ENCODE measurements at regions of chr16 and their contacts with region 1.

Region 1: GRCh38 chr16:28974437-28975157 is at the start of gene SPNS1:
- DNase-seq: peak; percentile 98
- ATAC-seq: peak; percentile 94
- H3K4me3 Mint-ChIP-seq: peak within 1 kb of the TSS; percentile 98
- H3K27ac Mint-ChIP-seq: peak within 1 kb of the TSS; percentile 93
- H3K4me1 Mint-ChIP-seq: peaks cover 30% of the 10 kb centered on the region
- H3K27me3 Mint-ChIP-seq: no peaks in the 10 kb centered on the region
- total RNA-seq, gene SPNS1: 12.7 to 14.2 TPM

Region 2: GRCh38 chr16:28984619-28985135 is 10.1 kb after region 1 on chr16 and contains the start of gene LAT:
- CTCF ChIA-PET with region 1: interaction called, 32 read pairs
- POLR2A ChIA-PET with region 1: interaction called, 3 read pairs
- intact Hi-C with region 1: no loop called
- DNase-seq: peak; percentile 87
- ATAC-seq: peak; percentile 67
- H3K4me3 Mint-ChIP-seq: peak within 1 kb of the TSS; percentile 99
- H3K27ac Mint-ChIP-seq: peak within 1 kb of the TSS; percentile 89
- H3K4me1 Mint-ChIP-seq: peaks cover 43% of the 10 kb centered on the region
- H3K27me3 Mint-ChIP-seq: no peaks in the 10 kb centered on the region
- total RNA-seq, gene LAT: 200 to 234 TPM

Region 3: GRCh38 chr16:29029168-29029994 is 54.8 kb after region 1 on chr16:
- CTCF ChIA-PET with region 1: interaction called, 4 read pairs
- POLR2A ChIA-PET with region 1: interaction called, 6 read pairs
- intact Hi-C with region 1: loop called in 1 of 2 experiments (anchors 5 kb)
- DNase-seq: peak; percentile 96
- ATAC-seq: peak; percentile 96
- H3K4me3 Mint-ChIP-seq: peak overlapping the region; percentile 0
- H3K27ac Mint-ChIP-seq: peak overlapping the region; percentile 84
- H3K4me1 Mint-ChIP-seq: peaks cover 46% of the 10 kb centered on the region
- H3K27me3 Mint-ChIP-seq: no peaks in the 10 kb centered on the region

Region 4: DNA sequence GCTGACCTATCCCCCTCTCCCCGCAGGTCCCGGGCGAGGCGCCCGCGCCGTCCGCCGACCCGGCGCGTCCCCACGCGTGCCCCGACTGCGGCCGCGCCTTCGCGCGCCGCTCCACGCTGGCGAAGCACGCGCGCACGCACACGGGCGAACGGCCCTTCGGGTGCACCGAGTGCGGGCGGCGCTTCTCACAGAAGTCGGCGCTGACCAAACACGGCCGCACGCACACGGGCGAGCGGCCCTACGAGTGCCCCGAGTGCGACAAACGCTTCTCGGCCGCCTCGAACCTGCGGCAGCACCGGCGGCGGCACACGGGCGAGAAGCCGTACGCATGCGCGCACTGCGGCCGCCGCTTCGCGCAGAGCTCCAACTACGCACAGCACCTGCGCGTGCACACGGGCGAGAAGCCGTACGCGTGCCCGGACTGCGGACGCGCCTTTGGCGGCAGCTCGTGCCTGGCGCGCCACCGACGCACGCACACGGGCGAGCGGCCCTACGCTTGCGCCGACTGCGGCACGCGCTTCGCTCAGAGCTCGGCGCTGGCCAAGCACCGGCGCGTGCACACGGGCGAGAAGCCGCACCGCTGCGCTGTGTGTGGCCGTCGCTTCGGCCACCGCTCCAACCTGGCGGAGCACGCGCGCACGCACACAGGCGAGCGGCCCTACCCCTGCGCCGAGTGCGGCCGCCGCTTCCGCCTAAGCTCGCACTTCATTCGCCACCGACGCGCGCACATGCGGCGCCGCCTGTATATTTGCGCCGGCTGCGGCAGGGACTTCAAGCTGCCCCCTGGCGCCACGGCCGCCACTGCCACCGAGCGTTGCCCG is 1443.1 kb after region 1 on chr16:
- CTCF ChIA-PET with region 1: no interaction called
- POLR2A ChIA-PET with region 1: no interaction called
- intact Hi-C with region 1: no loop called
- DNase-seq: peak; percentile 94
- ATAC-seq: peak; percentile 92
- H3K4me3 Mint-ChIP-seq: peak overlapping the region; percentile 49
- H3K27ac Mint-ChIP-seq: no peak overlapping the region
- H3K4me1 Mint-ChIP-seq: peaks cover 31% of the 10 kb centered on the region
- H3K27me3 Mint-ChIP-seq: no peaks in the 10 kb centered on the region

Measured in activated CD4-positive, alpha-beta T cell treated with anti-CD3 and anti-CD28 coated beads for 36 hours (primary cell).